Activated naive CD4-positive, alpha-beta T cell treated with anti-CD3 and anti-CD28 coated beads for 36 hours (primary cell): ENCODE measurements at regions of chr2 and their contacts with region 1.

Region 1: GRCh38 chr2:65382776-65383357 is 49.5 kb downstream of the SPRED2 start:
- DNase-seq: peak; percentile 94
- H3K4me3 Mint-ChIP-seq: peak overlapping the region; percentile 23
- H3K27ac Mint-ChIP-seq: no peak overlapping the region
- H3K4me1 Mint-ChIP-seq: peaks cover 24% of the 10 kb centered on the region
- H3K27me3 Mint-ChIP-seq: no peaks in the 10 kb centered on the region

Region 2: DNA sequence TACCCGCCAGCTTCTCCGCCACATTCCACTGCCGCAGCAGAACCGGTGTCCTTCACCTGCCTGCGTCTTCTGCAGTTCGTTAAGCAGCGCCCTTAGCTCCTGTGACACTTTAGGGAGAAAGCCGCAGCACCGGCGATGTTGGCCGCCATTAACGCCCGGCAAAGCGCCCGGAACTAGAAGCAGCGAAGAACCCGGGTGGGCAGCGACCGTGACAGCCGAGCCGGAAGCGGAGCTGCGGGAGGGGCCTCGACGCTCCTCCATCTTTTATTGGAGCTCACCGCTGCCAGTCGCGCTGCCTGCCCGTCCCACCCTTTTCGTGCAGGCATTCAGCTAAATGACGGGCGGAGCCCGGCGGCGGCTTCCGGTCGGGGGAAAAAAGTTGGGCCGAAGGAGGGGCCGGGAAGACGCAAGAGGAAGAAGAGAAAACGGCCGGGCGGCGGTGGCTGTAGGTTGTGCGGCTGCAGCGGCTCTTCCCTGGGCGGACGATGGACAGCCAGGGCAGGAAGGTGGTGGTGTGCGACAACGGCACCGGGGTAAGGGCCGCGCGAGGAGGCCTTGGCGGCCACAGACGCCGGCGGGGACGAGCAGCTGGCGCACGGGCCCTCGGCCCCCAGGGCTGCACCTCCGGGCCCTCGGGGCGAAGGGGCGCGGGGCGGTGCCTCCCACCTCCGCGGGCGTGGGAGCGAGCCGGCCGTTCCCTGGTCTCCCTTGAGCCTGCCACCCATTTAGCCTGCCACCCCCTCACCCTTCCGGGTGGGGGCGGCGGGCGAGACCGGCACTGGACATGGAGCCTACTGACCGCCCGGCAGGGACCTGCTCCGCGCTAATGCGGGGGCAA is 155.2 kb before region 1 on chr2 and contains the start of gene ACTR2:
- CTCF ChIA-PET with region 1: no interaction called
- intact Hi-C with region 1: loop called (anchors 1 kb)
- DNase-seq: peak; percentile 96
- H3K4me3 Mint-ChIP-seq: peak within 1 kb of the TSS; percentile 98
- H3K27ac Mint-ChIP-seq: peak within 1 kb of the TSS; percentile 99
- H3K4me1 Mint-ChIP-seq: peaks cover 41% of the 10 kb centered on the region
- H3K27me3 Mint-ChIP-seq: no peaks in the 10 kb centered on the region
- total RNA-seq, gene ACTR2: 358 to 366 TPM

Region 3: DNA sequence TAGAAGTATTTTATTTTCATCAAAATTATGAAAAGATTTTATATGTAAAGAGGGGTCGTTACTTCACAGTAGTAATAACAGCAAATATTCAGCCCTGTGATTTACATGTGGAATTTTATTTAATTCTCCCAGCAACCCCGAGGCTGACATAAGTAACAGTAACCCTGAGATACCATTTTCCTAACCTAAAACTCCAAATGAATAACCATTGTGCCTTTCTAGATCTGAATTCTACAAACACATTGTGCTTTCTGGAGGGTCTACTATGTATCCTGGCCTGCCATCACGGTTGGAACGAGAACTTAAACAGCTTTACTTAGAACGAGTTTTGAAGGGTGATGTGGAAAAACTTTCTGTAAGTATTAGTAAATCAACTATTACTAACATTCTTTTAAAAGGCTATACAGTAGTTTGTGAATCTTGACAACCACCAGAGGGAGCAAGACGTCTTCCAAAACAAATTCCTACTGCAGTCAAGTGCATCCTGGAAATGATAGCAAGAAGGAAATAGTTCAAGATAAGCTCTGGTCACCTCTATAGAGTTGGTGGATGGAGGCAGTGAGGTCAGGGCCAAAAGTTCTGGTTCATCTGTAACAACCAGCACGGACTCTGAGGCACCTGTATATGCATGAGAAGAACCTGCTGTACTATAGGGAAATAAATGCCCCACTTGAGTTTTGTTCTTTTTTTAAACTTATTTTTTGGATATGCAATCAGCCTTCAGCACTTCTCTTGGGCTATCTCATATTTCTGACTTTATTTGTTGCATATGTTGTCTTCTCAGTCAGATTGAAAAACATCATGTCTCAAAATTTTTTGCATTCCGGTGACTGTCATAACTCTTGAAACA is 117.8 kb before region 1 on chr2:
- CTCF ChIA-PET with region 1: no interaction called
- intact Hi-C with region 1: loop called (anchors 1 kb)
- DNase-seq: peak; percentile 27
- H3K4me3 Mint-ChIP-seq: no peak overlapping the region
- H3K27ac Mint-ChIP-seq: no peak overlapping the region
- H3K4me1 Mint-ChIP-seq: no peaks in the 10 kb centered on the region
- H3K27me3 Mint-ChIP-seq: no peaks in the 10 kb centered on the region

Region 4: GRCh38 chr2:65320042-65320725 is 62.7 kb before region 1 on chr2:
- CTCF ChIA-PET with region 1: no interaction called
- intact Hi-C with region 1: loop called (anchors 1 kb)
- DNase-seq: no peak
- H3K4me3 Mint-ChIP-seq: no peak overlapping the region
- H3K27ac Mint-ChIP-seq: no peak overlapping the region
- H3K4me1 Mint-ChIP-seq: peaks cover 11% of the 10 kb centered on the region
- H3K27me3 Mint-ChIP-seq: no peaks in the 10 kb centered on the region

Region 5: GRCh38 chr2:65350684-65351083 is 32.2 kb before region 1 on chr2:
- CTCF ChIA-PET with region 1: no interaction called
- intact Hi-C with region 1: no loop called
- DNase-seq: peak; percentile 8
- H3K4me3 Mint-ChIP-seq: no peak overlapping the region
- H3K27ac Mint-ChIP-seq: no peak overlapping the region
- H3K4me1 Mint-ChIP-seq: peaks cover 6% of the 10 kb centered on the region
- H3K27me3 Mint-ChIP-seq: no peaks in the 10 kb centered on the region

Region 6: GRCh38 chr2:65366595-65367125 is 16.2 kb before region 1 on chr2:
- CTCF ChIA-PET with region 1: interaction called, 6 read pairs
- intact Hi-C with region 1: loop called (anchors 1 kb)
- DNase-seq: peak; percentile 64
- H3K4me3 Mint-ChIP-seq: no peak overlapping the region
- H3K27ac Mint-ChIP-seq: no peak overlapping the region
- H3K4me1 Mint-ChIP-seq: peaks cover 13% of the 10 kb centered on the region
- H3K27me3 Mint-ChIP-seq: no peaks in the 10 kb centered on the region

Region 7: DNA sequence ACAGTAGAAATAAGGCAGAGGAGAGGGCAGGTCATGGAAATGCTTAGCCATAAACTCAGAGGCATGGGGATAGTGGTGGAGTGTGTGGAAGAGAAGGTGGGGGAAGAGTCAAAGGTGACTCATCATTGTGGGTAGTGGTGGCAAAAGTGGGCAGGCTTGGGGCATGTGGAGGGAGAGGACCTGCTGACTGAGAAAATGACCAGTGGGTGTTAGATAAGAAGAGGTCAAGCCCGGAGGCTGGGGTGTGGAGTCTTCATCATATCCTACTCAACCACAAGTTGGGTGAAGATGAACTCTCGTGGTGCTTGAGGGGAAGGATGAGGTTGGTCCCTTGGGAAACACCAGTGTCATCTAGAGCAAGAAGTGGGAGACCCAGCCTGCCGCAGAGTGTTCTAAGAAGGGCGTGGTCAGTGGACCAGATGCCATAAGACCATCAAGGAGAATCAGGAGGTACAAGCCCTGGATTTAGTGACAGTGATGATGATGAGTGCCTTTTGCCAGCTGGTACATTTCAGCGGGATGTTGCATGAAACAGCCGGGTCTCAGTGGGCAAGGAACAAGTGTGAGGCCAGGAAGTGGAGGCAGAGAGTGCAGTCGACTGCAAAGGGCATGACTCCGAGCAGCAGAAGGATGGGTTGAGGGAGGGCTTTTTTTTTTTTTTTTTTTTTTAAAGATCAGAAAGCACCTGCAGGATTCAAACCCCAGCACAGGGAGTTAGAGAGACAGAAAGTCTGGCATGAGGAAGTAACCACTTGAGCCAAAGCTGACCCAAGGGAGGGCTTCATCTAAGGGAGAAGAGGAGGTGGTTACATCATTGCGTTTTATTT is 172.1 kb after region 1 on chr2:
- CTCF ChIA-PET with region 1: no interaction called
- intact Hi-C with region 1: loop called (anchors 1 kb)
- DNase-seq: no peak
- H3K4me3 Mint-ChIP-seq: no peak overlapping the region
- H3K27ac Mint-ChIP-seq: no peak overlapping the region
- H3K4me1 Mint-ChIP-seq: peaks cover 3% of the 10 kb centered on the region
- H3K27me3 Mint-ChIP-seq: no peaks in the 10 kb centered on the region